Panc1 (cell line): ENCODE measurements at regions of chr10 and their contacts with region 1.

Region 1: DNA sequence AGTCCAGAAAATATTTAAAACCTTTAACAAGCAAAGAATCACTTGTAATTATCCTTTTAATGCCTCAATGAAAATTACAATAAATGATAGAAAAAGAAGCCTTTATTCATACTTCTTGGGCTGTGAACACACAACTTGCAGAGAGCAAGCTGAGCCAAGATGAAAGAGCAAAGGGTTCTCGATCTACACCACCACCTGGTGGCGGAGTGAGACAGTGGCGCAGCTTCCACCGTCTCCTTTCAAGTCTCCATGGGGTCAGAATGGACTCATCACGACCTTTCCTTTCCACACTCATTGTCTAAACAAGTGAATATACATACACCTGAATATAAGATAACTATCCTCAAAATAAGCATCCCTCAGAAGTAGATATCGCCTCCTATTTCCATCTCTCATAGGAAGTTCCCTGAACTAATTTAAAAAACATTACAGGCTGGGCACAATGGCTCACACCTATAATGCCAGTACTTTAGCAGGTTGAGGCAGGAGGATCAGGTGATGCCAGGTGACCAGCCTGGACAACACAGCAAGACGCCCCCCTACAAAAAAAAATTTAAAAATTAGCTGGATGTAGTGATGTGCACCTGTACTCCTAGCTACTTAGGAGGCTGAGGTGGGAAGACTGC is 40.7 kb downstream of the ATE1 start:
- DNase-seq: peak; percentile 48
- ATAC-seq: peak; percentile 97
- H3K4me3 ChIP-seq: no peak overlapping the region
- H3K27ac ChIP-seq: no peak overlapping the region
- H3K4me1 ChIP-seq: no peaks in the 10 kb centered on the region
- H3K27me3 ChIP-seq: no peaks in the 10 kb centered on the region
- CTCF ChIP-seq: peak; percentile 94

Region 2: DNA sequence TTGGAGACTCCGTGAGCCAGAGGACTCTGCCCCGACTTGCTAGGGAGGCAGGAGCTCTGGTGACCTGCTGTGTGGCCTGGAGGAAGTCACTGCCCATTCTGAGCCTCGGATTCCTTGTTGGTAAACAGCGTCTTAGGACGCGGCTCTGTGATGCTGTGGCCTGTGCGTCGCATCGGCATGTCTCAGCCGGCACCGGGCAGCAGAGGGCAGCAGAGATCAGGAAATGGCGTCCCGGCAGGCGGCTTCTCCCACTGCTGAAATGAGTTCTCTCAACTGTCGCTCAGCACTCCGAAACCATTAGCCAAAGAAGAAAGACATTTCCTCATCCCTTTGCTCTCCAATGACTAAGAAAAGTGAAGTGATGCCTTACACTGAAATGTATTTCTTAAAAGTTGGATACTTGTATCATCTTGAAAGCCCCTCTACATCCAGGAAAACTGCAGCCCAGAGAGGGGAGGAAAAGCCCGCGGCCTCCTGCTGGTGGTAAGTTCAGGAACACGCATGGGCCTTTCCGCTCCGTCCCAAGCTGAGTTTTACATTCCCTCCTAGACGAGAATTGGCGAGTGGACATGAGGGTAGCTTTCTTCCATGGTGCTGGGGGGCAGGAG is 944.2 kb before region 1 on chr10:
- CTCF ChIA-PET with region 1: no interaction called
- POLR2A ChIA-PET with region 1: no interaction called
- in situ Hi-C with region 1: no loop called
- intact Hi-C with region 1: loop called (anchors 2 kb)
- DNase-seq: peak; percentile 61
- ATAC-seq: peak; percentile 97
- H3K4me3 ChIP-seq: peak overlapping the region in 1 of 2 experiments; percentile 37; a peak in 1 of 4 replicates
- H3K27ac ChIP-seq: no peak overlapping the region
- H3K4me1 ChIP-seq: peaks cover 7% of the 10 kb centered on the region; the same call in 1 of the 2 replicates
- H3K27me3 ChIP-seq: no peaks in the 10 kb centered on the region
- CTCF ChIP-seq: peak; percentile 94